Endothelial cell of umbilical vein (primary cell): ENCODE measurements at regions of chr7 and their contacts with region 1.

Region 1: GRCh38 chr7:108415821-108416536 is 40.3 kb downstream of the NRCAM start:
- DNase-seq: peak; percentile 77
- H3K4me3 ChIP-seq: no peak overlapping the region
- H3K27ac ChIP-seq: peak overlapping the region; percentile 88
- H3K4me1 ChIP-seq: peaks cover 65% of the 10 kb centered on the region
- H3K27me3 ChIP-seq: no peaks in the 10 kb centered on the region
- CTCF ChIP-seq: no peak
- POLR2A ChIP-seq: no peak

Region 2: GRCh38 chr7:108002726-108003598 is 413.0 kb before region 1 on chr7 and contains the start of gene LAMB1:
- CTCF ChIA-PET with region 1: no interaction called
- POLR2A ChIA-PET with region 1: no interaction called
- dilution Hi-C with region 1: no loop called
- intact Hi-C with region 1: loop called (anchors 5 kb)
- DNase-seq: peak; percentile 83
- H3K4me3 ChIP-seq: peak within 1 kb of the TSS; percentile 84 to 95 (median 90)
- H3K27ac ChIP-seq: peak within 1 kb of the TSS; percentile 99
- H3K4me1 ChIP-seq: peaks cover 45% of the 10 kb centered on the region
- H3K27me3 ChIP-seq: no peaks in the 10 kb centered on the region
- CTCF ChIP-seq: no peak
- POLR2A ChIP-seq: peak; percentile 97
- total RNA-seq, gene LAMB1: 703 and 734 TPM in 2 replicates

Region 3: DNA sequence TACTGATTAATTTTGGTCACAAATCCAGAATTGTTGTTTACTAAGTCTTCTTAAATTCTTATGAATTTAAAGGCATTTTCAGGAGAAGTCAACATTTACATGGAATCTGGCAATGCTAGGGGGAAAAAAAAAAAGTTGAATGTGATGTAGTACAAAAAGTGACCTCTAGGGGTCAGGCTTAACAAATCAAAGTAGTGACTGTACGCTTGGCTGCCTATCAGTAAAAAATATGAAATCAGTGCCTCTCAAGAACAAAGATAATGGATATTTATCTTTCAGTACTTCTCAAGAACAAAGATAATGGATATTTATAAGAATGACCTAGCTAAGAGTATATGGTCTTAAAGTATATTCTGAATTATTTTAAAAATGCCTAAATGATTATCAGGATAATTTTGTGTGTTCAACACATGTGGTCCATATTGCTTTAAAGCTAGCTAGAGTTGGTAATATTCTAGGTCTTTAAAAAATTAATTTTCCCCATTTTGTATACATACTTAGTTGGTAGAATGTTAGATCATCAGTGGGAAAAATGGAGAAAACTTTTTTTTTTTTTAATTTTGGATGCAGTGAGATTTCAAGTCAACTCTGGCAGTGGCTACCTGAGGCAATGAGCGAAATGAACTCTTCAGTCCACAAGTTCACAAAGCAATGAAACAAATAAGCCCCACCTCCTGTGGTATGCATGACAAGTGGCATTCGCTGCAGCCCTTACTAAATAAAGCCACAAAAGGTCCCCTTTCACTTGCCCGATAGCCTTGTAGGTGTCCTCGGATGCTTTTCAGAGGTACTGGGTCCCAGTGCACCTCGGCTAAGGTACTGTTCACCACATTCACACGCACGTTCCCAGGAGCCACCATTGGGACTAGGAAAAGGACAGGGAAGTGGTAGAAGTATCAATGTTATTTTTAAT is 234.7 kb before region 1 on chr7:
- CTCF ChIA-PET with region 1: no interaction called
- POLR2A ChIA-PET with region 1: no interaction called
- dilution Hi-C with region 1: no loop called
- intact Hi-C with region 1: loop called (anchors 1 kb)
- DNase-seq: peak; percentile 86
- H3K4me3 ChIP-seq: no peak overlapping the region
- H3K27ac ChIP-seq: no peak overlapping the region
- H3K4me1 ChIP-seq: no peaks in the 10 kb centered on the region
- H3K27me3 ChIP-seq: no peaks in the 10 kb centered on the region
- CTCF ChIP-seq: peak; percentile 32 to 54
- POLR2A ChIP-seq: no peak

Region 4: GRCh38 chr7:108246227-108246837 is 169.6 kb before region 1 on chr7:
- CTCF ChIA-PET with region 1: no interaction called
- POLR2A ChIA-PET with region 1: no interaction called
- dilution Hi-C with region 1: no loop called
- intact Hi-C with region 1: loop called (anchors 1 kb)
- DNase-seq: peak; percentile 91
- H3K4me3 ChIP-seq: no peak overlapping the region
- H3K27ac ChIP-seq: peak overlapping the region; percentile 79
- H3K4me1 ChIP-seq: peaks cover 30% of the 10 kb centered on the region
- H3K27me3 ChIP-seq: no peaks in the 10 kb centered on the region
- CTCF ChIP-seq: no peak
- POLR2A ChIP-seq: peak; percentile 57

Region 5: GRCh38 chr7:108308903-108309302 is 107.1 kb before region 1 on chr7:
- CTCF ChIA-PET with region 1: interaction called, 3 read pairs
- POLR2A ChIA-PET with region 1: no interaction called
- dilution Hi-C with region 1: no loop called
- intact Hi-C with region 1: loop called (anchors 1 kb)
- DNase-seq: peak; percentile 60
- H3K4me3 ChIP-seq: no peak overlapping the region
- H3K27ac ChIP-seq: peak overlapping the region; percentile 95
- H3K4me1 ChIP-seq: peaks cover 60% of the 10 kb centered on the region
- H3K27me3 ChIP-seq: no peaks in the 10 kb centered on the region
- CTCF ChIP-seq: no peak
- POLR2A ChIP-seq: no peak

Region 6: GRCh38 chr7:108486291-108486966 is 70.5 kb after region 1 on chr7:
- CTCF ChIA-PET with region 1: no interaction called
- POLR2A ChIA-PET with region 1: no interaction called
- dilution Hi-C with region 1: no loop called
- intact Hi-C with region 1: loop called (anchors 2 kb)
- DNase-seq: peak; percentile 46
- H3K4me3 ChIP-seq: no peak overlapping the region
- H3K27ac ChIP-seq: peak overlapping the region; percentile 18
- H3K4me1 ChIP-seq: peaks cover 34% of the 10 kb centered on the region
- H3K27me3 ChIP-seq: no peaks in the 10 kb centered on the region
- CTCF ChIP-seq: no peak
- POLR2A ChIP-seq: no peak

Region 7: GRCh38 chr7:108629651-108630400 is 213.8 kb after region 1 on chr7:
- CTCF ChIA-PET with region 1: no interaction called
- POLR2A ChIA-PET with region 1: no interaction called
- dilution Hi-C with region 1: no loop called
- intact Hi-C with region 1: no loop called
- DNase-seq: no peak
- H3K4me3 ChIP-seq: no peak overlapping the region
- H3K27ac ChIP-seq: no peak overlapping the region
- H3K4me1 ChIP-seq: no peaks in the 10 kb centered on the region
- H3K27me3 ChIP-seq: peaks cover 4 to 13% of the 10 kb centered on the region in 2 experiments
- CTCF ChIP-seq: no peak
- POLR2A ChIP-seq: no peak